ENCODE measurements at regions of chr7 and their contacts with region 1.

Region 1: GRCh38 chr7:34900891-34901513 is 136.3 kb downstream of the DPY19L1 start:
- DNase-seq: peak; percentile 41
- H3K4me3 ChIP-seq: no peak overlapping the region
- H3K27ac ChIP-seq: no peak overlapping the region
- H3K4me1 ChIP-seq: no peaks in the 10 kb centered on the region
- H3K27me3 ChIP-seq: no peaks in the 10 kb centered on the region
- CTCF ChIP-seq: peak; percentile 54

Region 2: DNA sequence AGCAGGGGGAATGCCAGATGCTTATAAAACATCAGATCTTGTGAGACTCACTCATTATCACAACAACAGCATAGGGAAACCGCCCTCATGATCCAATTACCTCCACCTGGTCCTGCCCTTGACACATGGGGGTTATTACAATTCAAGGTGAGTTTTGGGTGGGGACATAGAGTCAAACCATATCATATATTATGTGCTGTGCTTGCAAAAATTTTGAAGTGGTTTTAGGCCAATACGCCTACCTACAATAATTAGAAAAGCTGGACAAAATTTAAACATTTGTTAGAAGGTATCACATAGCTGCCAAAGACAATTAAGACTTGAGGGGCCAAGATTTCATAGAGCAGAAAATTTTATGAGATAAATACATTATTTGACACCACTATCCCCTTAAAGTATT is 213.5 kb before region 1 on chr7:
- CTCF ChIA-PET with region 1: interaction called, 13 read pairs
- POLR2A ChIA-PET with region 1: no interaction called
- intact Hi-C with region 1: no loop called
- DNase-seq: no peak
- H3K4me3 ChIP-seq: no peak overlapping the region
- H3K27ac ChIP-seq: no peak overlapping the region
- H3K4me1 ChIP-seq: no peaks in the 10 kb centered on the region
- H3K27me3 ChIP-seq: peaks cover 12% of the 10 kb centered on the region
- CTCF ChIP-seq: no peak

Region 3: GRCh38 chr7:34850681-34851080 is 50.3 kb before region 1 on chr7:
- CTCF ChIA-PET with region 1: no interaction called
- POLR2A ChIA-PET with region 1: no interaction called
- intact Hi-C with region 1: no loop called
- DNase-seq: no peak
- H3K4me3 ChIP-seq: no peak overlapping the region
- H3K27ac ChIP-seq: no peak overlapping the region
- H3K4me1 ChIP-seq: peaks cover 1% of the 10 kb centered on the region
- H3K27me3 ChIP-seq: no peaks in the 10 kb centered on the region
- CTCF ChIP-seq: no peak